ENCODE measurements at regions of chr15 and their contacts with region 1.

Region 1: DNA sequence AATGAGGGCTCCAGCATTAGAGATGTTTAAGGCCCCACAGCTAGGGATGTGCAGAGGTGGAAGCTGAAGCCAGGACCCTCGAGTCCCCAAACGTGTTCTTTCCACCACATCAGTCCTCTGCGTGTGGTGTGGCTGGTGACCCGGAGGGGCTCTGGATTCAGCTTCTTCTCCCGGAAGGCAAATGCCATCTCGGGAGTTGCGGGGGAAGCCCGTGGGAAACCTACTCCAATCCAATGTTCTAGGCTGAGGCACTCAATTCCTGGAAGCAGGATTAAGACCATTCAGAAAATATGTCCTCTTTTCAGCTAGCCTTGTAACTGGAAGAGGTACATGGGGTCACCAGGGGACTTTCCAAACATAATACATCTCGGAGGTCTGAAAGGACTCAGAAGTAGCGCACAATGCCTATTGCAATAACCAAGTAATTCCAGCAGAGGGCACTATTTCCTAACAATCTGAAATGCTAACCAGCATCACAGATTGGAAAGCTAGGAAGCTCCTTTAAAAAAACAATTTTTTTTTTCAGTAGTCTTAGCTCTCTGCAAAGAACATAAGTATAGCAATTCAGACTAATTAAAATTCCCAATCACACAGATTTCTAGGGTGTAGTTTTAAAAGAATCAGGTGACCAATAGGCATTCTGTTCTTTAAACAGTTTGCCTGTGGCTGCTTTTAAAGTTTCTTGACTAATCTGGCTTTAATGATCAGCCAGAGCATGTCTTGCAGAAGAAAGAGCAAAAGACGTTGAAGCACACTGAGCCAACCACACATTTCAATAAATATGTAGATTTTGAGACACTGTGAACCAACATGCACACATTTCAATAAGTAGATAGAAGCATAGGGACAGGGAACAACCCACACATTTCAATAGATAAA is 36.1 kb downstream of the BNC1 start:
- DNase-seq: peak; percentile 10
- ATAC-seq: no peak
- H3K4me3 Mint-ChIP-seq: no peak overlapping the region
- H3K27ac Mint-ChIP-seq: no peak overlapping the region
- H3K4me1 Mint-ChIP-seq: no peaks in the 10 kb centered on the region
- H3K27me3 Mint-ChIP-seq: peaks cover 47% of the 10 kb centered on the region

Region 2: DNA sequence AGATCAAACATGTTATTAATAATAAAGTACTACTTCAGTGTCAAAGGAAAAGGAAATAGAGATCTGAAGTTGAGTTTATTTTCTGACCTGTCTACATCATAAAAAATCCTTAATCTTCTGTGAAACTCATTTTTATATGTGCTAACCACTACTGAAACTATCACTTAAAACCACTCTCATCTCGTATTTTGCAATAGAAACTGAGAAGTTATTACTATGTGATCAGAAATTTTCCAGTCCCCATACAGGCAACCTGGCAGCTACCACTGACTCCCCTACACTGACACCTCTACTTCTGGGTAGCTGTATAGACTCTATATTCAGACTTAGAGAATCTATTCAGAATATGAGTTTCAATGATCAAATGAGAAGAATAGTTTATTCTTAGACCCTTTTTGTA is 49.1 kb before region 1 on chr15:
- CTCF ChIA-PET with region 1: no interaction called
- POLR2A ChIA-PET with region 1: no interaction called
- intact Hi-C with region 1: loop called in 1 of 2 experiments (anchors 10 kb)
- DNase-seq: peak; percentile 37
- ATAC-seq: peak; percentile 91
- H3K4me3 Mint-ChIP-seq: no peak overlapping the region
- H3K27ac Mint-ChIP-seq: no peak overlapping the region
- H3K4me1 Mint-ChIP-seq: peaks cover 20% of the 10 kb centered on the region
- H3K27me3 Mint-ChIP-seq: peaks cover 17% of the 10 kb centered on the region

Region 3: DNA sequence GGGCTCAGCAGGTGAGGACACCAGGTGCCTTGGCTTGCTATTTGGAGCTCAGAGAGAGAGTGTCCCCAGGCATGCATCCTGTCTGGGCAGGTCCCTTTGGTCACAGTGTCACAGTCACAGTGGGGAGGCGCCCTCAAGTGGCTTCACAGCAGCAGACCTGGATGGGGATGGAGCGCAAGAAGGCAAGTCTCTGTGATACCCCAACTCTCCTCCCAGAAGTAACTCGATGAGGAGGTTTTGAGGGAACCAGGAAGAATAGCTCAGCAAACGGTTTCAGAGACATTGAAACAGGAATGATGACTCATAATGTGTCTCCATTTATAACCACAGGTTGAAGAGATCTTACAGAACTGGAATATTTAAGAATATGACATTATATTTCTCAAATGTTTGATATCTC is 132.3 kb after region 1 on chr15:
- CTCF ChIA-PET with region 1: interaction called, 7 read pairs
- POLR2A ChIA-PET with region 1: no interaction called
- intact Hi-C with region 1: loop called (anchors 1 kb)
- DNase-seq: peak; percentile 69
- ATAC-seq: peak; percentile 81
- H3K4me3 Mint-ChIP-seq: no peak overlapping the region
- H3K27ac Mint-ChIP-seq: no peak overlapping the region
- H3K4me1 Mint-ChIP-seq: peaks cover 2% of the 10 kb centered on the region
- H3K27me3 Mint-ChIP-seq: peaks cover 47% of the 10 kb centered on the region

Region 4: GRCh38 chr15:83436458-83437158 is 188.2 kb after region 1 on chr15:
- CTCF ChIA-PET with region 1: interaction called, 12 read pairs
- POLR2A ChIA-PET with region 1: no interaction called
- intact Hi-C with region 1: loop called (anchors 1 to 2 kb)
- DNase-seq: no peak
- ATAC-seq: no peak
- H3K4me3 Mint-ChIP-seq: no peak overlapping the region
- H3K27ac Mint-ChIP-seq: no peak overlapping the region
- H3K4me1 Mint-ChIP-seq: no peaks in the 10 kb centered on the region
- H3K27me3 Mint-ChIP-seq: peaks cover 15% of the 10 kb centered on the region

Region 5: DNA sequence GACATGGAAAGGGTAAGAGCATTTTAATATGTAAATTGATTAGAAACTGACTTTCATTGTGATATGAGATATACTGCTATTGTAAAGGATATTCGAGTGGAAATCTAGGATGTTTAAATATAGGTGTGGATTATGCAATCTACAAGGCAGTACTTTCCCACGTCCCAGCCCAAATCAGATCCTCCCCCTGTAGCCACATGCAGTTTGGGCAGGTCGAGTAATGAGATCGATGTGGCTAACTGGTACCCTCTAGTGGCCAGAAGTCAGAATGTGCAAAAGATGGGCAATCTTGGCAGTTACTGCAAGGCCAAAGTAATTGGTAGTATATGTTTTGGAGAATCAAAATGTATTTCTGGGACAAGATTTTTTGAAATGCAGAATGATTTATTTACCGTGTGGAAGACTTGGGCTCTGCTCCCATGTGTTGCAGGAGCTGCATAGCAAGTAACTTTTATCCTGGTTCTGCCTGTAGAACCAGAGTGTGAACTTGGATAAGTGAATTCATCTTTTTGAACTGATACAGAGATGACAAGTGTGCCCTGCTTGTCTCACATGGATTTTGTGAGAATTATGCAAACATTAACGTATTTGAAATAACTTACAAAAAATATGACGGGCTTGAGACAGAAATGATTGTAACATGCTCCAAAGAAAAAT is 311.0 kb after region 1 on chr15:
- CTCF ChIA-PET with region 1: interaction called, 10 read pairs
- POLR2A ChIA-PET with region 1: no interaction called
- intact Hi-C with region 1: loop called (anchors 1 to 2 kb)
- DNase-seq: peak; percentile 65
- ATAC-seq: peak; percentile 60
- H3K4me3 Mint-ChIP-seq: no peak overlapping the region
- H3K27ac Mint-ChIP-seq: no peak overlapping the region
- H3K4me1 Mint-ChIP-seq: no peaks in the 10 kb centered on the region
- H3K27me3 Mint-ChIP-seq: peaks cover 12% of the 10 kb centered on the region